Transverse colon (tissue), 4 donors: ENCODE measurements at regions of chr20 and their contacts with region 1.

Region 1: DNA sequence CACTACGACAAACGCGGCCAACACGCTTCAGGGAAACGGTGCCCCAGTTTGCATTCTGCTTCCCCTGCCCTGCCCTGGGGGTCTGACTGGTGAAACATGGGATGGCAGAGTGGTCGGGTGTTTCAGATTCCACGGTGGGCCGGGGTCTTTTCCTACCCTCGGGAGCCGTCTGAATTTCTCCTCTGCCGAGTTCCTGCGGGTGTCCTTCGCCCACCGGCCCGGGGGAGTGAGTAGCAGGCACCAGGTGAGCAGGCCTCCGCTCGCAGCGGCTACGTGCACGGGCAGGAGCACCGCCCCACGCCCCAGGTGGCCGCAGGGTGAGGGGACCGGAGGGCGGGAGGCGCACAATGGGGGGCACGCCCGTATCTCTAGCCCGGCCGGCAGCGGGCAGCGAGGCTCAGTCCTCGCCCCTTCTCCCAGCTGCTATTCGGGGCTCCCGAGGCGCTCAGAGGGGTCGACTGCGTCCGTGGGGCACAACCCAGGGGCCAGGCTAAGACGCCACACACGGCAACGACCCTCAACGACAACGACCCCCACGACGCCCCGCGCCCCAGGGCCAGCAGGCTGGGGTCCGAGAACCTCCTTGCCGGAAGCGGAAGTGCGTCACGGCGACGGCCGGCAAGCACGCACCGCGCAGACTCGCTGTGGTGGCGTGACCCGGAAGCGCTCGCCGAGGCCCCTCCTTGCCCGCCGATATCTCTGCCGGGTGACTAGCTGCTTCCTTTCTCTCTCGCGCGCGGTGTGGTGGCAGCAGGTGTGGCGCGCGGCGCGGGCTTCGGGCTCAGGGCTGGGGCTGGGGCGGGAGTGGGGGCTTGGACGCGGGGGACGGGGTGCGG is at the start of gene RPS21:
- DNase-seq: peak; percentile 95
- H3K4me3 ChIP-seq: peak within 1 kb of the TSS; percentile 73 to 98 (median 84)
- H3K27ac ChIP-seq: peak within 1 kb of the TSS; percentile 91 to 97 (median 94)
- H3K4me1 ChIP-seq: peaks cover 22 to 24% (median 23%) of the 10 kb centered on the region in 4 donors
- H3K27me3 ChIP-seq: no peaks in the 10 kb centered on the region
- CTCF ChIP-seq: peak in 1 of 5 experiments; percentile 18
- EP300 ChIP-seq: no peak
- POLR2A ChIP-seq: peak; percentile 81
- total RNA-seq, gene RPS21: 585 to 2,728 (median 1,375) TPM

Region 2: DNA sequence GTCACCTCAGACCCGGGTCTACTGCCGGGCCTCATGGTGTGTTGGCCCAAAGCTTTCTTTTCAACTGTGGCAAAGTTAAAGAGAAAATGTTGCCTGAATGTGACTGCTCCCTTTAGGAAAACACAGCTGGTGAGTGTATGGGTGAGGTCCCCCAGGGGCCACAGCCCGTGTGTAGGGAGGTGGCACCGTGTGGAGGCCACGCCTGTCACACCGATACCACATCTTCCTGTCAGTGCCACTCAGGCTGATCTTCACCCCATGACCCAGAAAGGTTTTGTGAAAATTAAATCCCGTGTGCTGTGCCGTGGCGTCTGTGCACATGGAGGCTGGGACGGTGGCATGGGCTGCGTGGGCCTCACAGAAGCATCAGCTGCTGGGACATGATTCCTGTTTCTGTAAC is 94.5 kb before region 1 on chr20:
- in situ Hi-C with region 1: loop called in 2 of 4 experiments (anchors 10 kb)
- intact Hi-C with region 1: no loop called
- DNase-seq: no peak
- H3K4me3 ChIP-seq: no peak overlapping the region
- H3K27ac ChIP-seq: no peak overlapping the region
- H3K4me1 ChIP-seq: no peaks in the 10 kb centered on the region
- H3K27me3 ChIP-seq: no peaks in the 10 kb centered on the region
- CTCF ChIP-seq: no peak
- EP300 ChIP-seq: no peak
- POLR2A ChIP-seq: no peak

Region 3: DNA sequence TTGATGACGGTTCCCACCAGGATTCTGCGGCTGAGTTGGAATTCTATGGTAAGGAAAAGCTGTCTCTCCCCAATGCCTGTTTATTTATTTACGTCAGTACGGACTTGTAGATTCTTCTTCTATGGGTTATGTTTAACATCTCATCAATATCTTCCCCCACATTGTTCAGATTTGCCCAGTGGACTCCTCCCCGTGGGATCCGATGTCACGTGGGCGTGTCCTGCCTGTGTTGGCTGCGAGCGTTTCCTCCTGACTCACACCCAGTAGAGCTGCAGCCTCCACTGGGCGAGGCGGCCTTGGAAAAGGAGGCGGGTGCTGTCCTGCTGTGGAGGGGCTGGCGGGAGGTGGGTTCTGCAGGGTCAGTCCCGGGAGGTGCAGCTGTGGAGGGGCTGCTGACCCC is 208.9 kb after region 1 on chr20:
- in situ Hi-C with region 1: no loop called
- intact Hi-C with region 1: no loop called
- DNase-seq: peak; percentile 61
- H3K4me3 ChIP-seq: no peak overlapping the region
- H3K27ac ChIP-seq: no peak overlapping the region
- H3K4me1 ChIP-seq: peaks cover 0 to 14% (median 3%) of the 10 kb centered on the region in 4 donors
- H3K27me3 ChIP-seq: peaks cover 55% of the 10 kb centered on the region
- CTCF ChIP-seq: no peak
- EP300 ChIP-seq: no peak
- POLR2A ChIP-seq: no peak